ENCODE measurements at regions of chr17 and their contacts with region 1.

Region 1: GRCh38 chr17:80575057-80575875 is 30.6 kb downstream of the RPTOR start:
- DNase-seq: peak; percentile 96
- ATAC-seq: peak; percentile 100
- H3K4me3 Mint-ChIP-seq: no peak overlapping the region
- H3K27ac Mint-ChIP-seq: no peak overlapping the region
- H3K4me1 Mint-ChIP-seq: peaks cover 10% of the 10 kb centered on the region
- H3K27me3 Mint-ChIP-seq: no peaks in the 10 kb centered on the region
- CTCF ChIP-seq: peak; percentile 100

Region 2: GRCh38 chr17:80586846-80587228 is 11.6 kb after region 1 on chr17:
- CTCF ChIA-PET with region 1: interaction called, 19 read pairs
- POLR2A ChIA-PET with region 1: interaction called, 6 read pairs
- intact Hi-C with region 1: no loop called
- DNase-seq: no peak
- ATAC-seq: no peak
- H3K4me3 Mint-ChIP-seq: no peak overlapping the region
- H3K27ac Mint-ChIP-seq: peak overlapping the region; percentile 51
- H3K4me1 Mint-ChIP-seq: peaks cover 54% of the 10 kb centered on the region
- H3K27me3 Mint-ChIP-seq: no peaks in the 10 kb centered on the region
- CTCF ChIP-seq: no peak

Region 3: GRCh38 chr17:80596760-80597608 is 21.7 kb after region 1 on chr17:
- CTCF ChIA-PET with region 1: interaction called, 13 read pairs
- POLR2A ChIA-PET with region 1: no interaction called
- intact Hi-C with region 1: no loop called
- DNase-seq: peak; percentile 41
- ATAC-seq: peak; percentile 77
- H3K4me3 Mint-ChIP-seq: no peak overlapping the region
- H3K27ac Mint-ChIP-seq: no peak overlapping the region
- H3K4me1 Mint-ChIP-seq: peaks cover 70% of the 10 kb centered on the region
- H3K27me3 Mint-ChIP-seq: no peaks in the 10 kb centered on the region
- CTCF ChIP-seq: no peak